MCF 10A (cell line): ENCODE measurements at regions of chr9 and their contacts with region 1.

Region 1: GRCh38 chr9:81521892-81522291 is 167.5 kb downstream of the TLE1 start:
- DNase-seq: peak; percentile 42
- H3K4me3 Mint-ChIP-seq: no peak overlapping the region
- H3K27ac Mint-ChIP-seq: no peak overlapping the region
- H3K4me1 Mint-ChIP-seq: peaks cover 17% of the 10 kb centered on the region
- H3K27me3 Mint-ChIP-seq: no peaks in the 10 kb centered on the region
- CTCF ChIP-seq: no peak

Region 2: GRCh38 chr9:81492710-81493447 is 29.0 kb before region 1 on chr9:
- CTCF ChIA-PET with region 1: interaction called, 10 read pairs
- POLR2A ChIA-PET with region 1: no interaction called
- intact Hi-C with region 1: no loop called
- DNase-seq: peak; percentile 91
- H3K4me3 Mint-ChIP-seq: no peak overlapping the region
- H3K27ac Mint-ChIP-seq: peak overlapping the region; percentile 31
- H3K4me1 Mint-ChIP-seq: peaks cover 29% of the 10 kb centered on the region
- H3K27me3 Mint-ChIP-seq: peaks cover 31% of the 10 kb centered on the region
- CTCF ChIP-seq: no peak

Region 3: DNA sequence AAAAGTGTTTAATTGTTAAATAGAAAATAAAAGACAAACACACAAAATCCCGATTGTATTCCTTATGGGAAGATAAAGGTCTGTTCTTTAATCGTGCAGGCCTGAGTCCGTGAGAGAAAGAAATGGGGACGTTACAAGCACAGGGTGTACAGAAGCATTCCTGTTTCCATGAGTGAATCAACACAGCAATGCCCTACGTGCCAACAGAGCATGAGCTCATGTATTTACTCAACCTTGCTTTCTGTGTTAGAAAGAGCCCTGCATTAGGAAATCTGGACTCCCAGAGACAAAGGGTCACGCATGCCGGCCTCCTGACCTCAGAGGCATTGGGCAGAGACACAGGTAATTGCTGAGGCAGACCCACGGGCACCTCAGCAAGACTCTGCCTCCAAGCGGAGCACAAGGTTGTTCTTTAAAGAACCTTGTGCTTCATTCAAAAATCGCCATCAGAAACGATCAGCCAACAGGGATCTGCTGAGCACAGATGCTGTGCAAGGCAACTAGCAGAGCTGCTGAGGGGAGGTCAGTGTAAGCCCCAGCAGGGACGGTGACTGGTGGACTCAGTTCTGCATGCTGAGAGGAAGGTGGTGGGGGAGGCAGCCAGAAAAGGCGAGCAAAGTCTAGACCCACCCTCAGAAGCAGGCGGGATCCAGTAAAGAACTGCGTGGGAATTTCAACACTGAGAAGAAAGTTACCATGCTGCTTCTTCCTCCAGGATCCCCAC is 66.4 kb after region 1 on chr9:
- CTCF ChIA-PET with region 1: interaction called, 13 read pairs
- POLR2A ChIA-PET with region 1: interaction called, 3 read pairs
- intact Hi-C with region 1: loop called (anchors 2 kb)
- DNase-seq: peak; percentile 91
- H3K4me3 Mint-ChIP-seq: peak overlapping the region; percentile 66
- H3K27ac Mint-ChIP-seq: peak overlapping the region; percentile 98
- H3K4me1 Mint-ChIP-seq: peaks cover 25% of the 10 kb centered on the region
- H3K27me3 Mint-ChIP-seq: no peaks in the 10 kb centered on the region
- CTCF ChIP-seq: no peak

Region 4: GRCh38 chr9:81693671-81694378 is 171.9 kb after region 1 on chr9:
- CTCF ChIA-PET with region 1: no interaction called
- POLR2A ChIA-PET with region 1: no interaction called
- intact Hi-C with region 1: no loop called
- DNase-seq: no peak
- H3K4me3 Mint-ChIP-seq: no peak overlapping the region
- H3K27ac Mint-ChIP-seq: no peak overlapping the region
- H3K4me1 Mint-ChIP-seq: peaks cover 8% of the 10 kb centered on the region
- H3K27me3 Mint-ChIP-seq: no peaks in the 10 kb centered on the region
- CTCF ChIP-seq: no peak

Region 5: GRCh38 chr9:81894891-81895290 is 373.0 kb after region 1 on chr9:
- CTCF ChIA-PET with region 1: no interaction called
- POLR2A ChIA-PET with region 1: no interaction called
- intact Hi-C with region 1: no loop called
- DNase-seq: no peak
- H3K4me3 Mint-ChIP-seq: no peak overlapping the region
- H3K27ac Mint-ChIP-seq: no peak overlapping the region
- H3K4me1 Mint-ChIP-seq: peaks cover 9% of the 10 kb centered on the region
- H3K27me3 Mint-ChIP-seq: no peaks in the 10 kb centered on the region
- CTCF ChIP-seq: no peak